Mammary epithelial cell (primary cell): ENCODE measurements at regions of chr17 and their contacts with region 1.

Region 1: DNA sequence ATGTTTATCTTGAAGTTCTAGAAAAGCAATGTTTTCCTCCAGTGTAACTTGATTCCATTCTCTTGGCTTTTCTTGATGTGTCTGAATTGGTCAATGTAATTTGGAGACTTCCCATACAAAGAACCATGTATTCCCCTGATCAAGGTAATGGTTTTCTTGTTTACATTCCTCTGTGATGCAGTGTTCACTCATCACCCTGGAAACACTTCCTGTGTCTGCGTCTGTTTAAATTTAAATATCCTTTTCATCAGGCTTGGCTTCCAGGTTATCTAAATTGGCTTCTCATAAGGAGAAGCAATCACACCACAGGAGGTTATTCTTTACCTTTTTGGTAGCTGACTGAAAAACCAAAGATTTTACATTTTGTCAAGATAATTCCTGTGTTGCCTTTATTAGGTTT is 237.3 kb upstream of the WSCD1 start:
- DNase-seq: peak; percentile 84
- H3K4me3 ChIP-seq: no peak overlapping the region
- H3K27ac ChIP-seq: peak overlapping the region; percentile 100
- H3K4me1 ChIP-seq: peaks cover 61% of the 10 kb centered on the region
- H3K27me3 ChIP-seq: no peaks in the 10 kb centered on the region
- CTCF ChIP-seq: no peak

Region 2: DNA sequence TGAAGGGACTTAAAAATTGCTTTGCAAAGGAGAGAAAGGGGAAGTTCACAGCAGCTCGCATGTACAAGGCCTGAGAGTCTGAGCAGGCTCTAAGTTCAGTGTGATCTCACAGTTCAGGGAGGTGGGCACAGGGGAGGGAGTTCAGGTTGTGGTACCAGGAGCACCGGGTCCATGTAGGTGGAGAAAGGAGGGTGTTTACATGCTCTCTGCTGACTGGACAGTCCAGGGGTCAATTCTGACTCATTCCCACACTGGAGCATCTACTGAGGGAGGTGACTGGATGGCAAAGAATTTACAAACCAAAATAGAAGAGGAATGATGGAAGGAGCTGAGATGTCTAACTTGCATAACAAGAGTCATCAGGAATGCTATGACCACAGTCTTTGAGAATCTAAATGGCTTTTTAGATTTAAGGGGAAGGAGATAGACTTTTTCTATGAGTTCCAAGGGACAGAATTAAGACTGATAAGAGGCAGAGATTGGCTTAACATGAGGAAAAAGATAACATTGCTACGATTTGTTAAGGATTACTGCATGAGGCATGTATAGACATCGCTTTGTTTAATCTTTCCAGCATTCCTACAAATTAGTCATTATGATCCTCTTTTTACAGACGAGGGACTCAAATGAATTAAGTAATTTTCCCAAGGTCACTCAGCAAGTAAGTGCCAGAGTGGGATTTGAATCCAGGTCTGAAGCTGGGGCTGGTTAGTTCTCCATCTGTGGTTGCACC is 316.7 kb before region 1 on chr17:
- CTCF ChIA-PET with region 1: no interaction called
- dilution Hi-C with region 1: no loop called
- in situ Hi-C with region 1: no loop called
- intact Hi-C with region 1: loop called (anchors 10 kb)
- DNase-seq: peak; percentile 90
- H3K4me3 ChIP-seq: no peak overlapping the region
- H3K27ac ChIP-seq: peak overlapping the region; percentile 33
- H3K4me1 ChIP-seq: peaks cover 17% of the 10 kb centered on the region
- H3K27me3 ChIP-seq: no peaks in the 10 kb centered on the region
- CTCF ChIP-seq: no peak

Region 3: DNA sequence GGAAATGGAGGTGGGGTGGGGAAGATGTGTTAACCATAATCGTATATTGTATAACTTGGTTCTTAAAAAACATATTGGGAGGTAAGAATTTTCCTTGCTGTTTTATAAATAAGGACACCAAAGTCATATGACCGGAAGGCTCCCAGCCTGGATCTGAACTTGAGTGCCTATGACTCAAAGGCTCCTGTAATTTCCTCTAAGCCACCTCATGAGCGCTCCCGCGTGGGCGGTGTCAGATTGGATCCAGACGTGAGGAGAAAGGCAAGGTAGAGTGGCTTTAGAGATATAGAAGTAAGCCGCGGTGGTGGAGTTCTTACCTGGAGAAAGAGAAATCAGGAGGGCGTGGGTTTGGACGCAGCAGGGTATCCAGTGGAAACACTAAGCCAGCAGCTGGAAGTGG is 52.4 kb before region 1 on chr17:
- CTCF ChIA-PET with region 1: no interaction called
- dilution Hi-C with region 1: no loop called
- in situ Hi-C with region 1: no loop called
- intact Hi-C with region 1: loop called (anchors 1 kb)
- DNase-seq: peak; percentile 61
- H3K4me3 ChIP-seq: no peak overlapping the region
- H3K27ac ChIP-seq: no peak overlapping the region
- H3K4me1 ChIP-seq: peaks cover 13% of the 10 kb centered on the region
- H3K27me3 ChIP-seq: no peaks in the 10 kb centered on the region
- CTCF ChIP-seq: no peak

Region 4: GRCh38 chr17:5888811-5889210 is 55.9 kb after region 1 on chr17:
- CTCF ChIA-PET with region 1: no interaction called
- dilution Hi-C with region 1: no loop called
- in situ Hi-C with region 1: no loop called
- intact Hi-C with region 1: loop called (anchors 1 kb)
- DNase-seq: peak; percentile 96
- H3K4me3 ChIP-seq: no peak overlapping the region
- H3K27ac ChIP-seq: no peak overlapping the region
- H3K4me1 ChIP-seq: no peaks in the 10 kb centered on the region
- H3K27me3 ChIP-seq: peaks cover 1% of the 10 kb centered on the region
- CTCF ChIP-seq: no peak

Region 5: DNA sequence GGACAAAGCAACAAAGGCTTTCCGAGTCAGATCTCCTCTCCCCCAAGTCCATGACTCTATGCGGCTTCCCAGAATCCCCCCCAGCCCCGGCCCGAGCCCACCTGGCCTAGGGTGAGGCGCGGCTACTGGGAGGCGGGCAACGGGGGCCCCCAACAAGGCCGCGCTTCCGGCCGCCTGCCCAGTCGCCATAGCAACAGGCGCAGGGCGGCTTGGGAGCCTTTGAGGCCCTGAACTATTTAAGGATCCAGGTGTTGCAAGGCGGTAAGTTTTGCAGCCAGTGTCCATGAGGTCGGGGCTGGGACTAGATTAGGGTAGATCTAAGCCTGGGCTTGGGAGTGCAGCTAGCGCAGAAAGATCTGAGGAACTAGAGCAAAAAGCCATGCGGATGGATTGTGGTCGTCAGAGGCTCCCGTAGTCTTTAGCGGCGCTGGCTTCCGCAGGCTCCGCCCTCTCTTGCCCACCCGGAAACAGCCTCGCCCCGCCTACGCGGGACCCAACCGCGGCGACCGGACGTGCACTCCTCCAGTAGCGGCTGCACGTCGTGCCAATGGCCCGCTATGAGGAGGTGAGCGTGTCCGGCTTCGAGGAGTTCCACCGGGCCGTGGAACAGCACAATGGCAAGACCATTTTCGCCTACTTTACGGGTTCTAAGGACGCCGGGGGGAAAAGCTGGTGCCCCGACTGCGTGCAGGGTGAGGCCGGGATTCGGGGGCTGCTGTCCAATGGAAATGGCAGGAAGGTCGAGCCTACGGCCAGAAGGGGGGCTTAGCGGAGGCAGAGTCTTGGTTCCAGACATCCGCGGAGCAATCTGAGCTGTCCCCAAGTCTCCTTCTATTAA is 807.9 kb after region 1 on chr17 and contains the starts of genes KIAA0753 and TXNDC17:
- CTCF ChIA-PET with region 1: no interaction called
- dilution Hi-C with region 1: no loop called
- in situ Hi-C with region 1: no loop called
- intact Hi-C with region 1: loop called (anchors 10 kb)
- DNase-seq: peak; percentile 89
- H3K4me3 ChIP-seq: peak within 1 kb of the TSS; percentile 66 to 97 (median 79)
- H3K27ac ChIP-seq: peak within 1 kb of the TSS; percentile 87
- H3K4me1 ChIP-seq: peaks cover 43% of the 10 kb centered on the region
- H3K27me3 ChIP-seq: no peaks in the 10 kb centered on the region
- CTCF ChIP-seq: no peak
- total RNA-seq, gene KIAA0753: 23.2 to 25.2 TPM
- total RNA-seq, gene TXNDC17: 315 to 319 TPM